PC-9 (cell line): ENCODE measurements at regions of chr6 and their contacts with region 1.

Region 1: GRCh38 chr6:115570331-115570730 is 490.4 kb downstream of the FRK start:
- DNase-seq: no peak
- H3K4me3 ChIP-seq: no peak overlapping the region
- H3K27ac ChIP-seq: no peak overlapping the region
- H3K4me1 ChIP-seq: no peaks in the 10 kb centered on the region
- H3K27me3 ChIP-seq: no peaks in the 10 kb centered on the region
- CTCF ChIP-seq: no peak

Region 2: DNA sequence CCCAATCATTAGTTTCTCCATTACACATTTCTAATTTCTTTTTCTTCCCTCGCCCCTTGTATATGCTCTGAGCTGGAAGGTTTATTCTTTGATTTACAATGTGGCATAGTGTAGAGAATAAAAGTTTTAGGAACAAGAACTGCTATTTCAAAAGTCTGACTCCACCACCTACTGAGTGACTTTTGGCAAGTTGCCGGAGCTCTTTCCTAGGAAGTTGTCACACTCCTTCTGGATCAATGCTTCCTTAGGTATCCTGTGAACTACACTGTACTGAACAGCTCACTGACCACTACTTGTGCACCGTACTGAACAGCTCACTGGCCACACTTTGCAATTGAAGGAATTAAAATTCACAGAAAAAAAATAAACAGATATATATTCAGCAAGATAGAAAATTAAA is 32.1 kb after region 1 on chr6:
- CTCF ChIA-PET with region 1: no interaction called
- POLR2A ChIA-PET with region 1: no interaction called
- intact Hi-C with region 1: no loop called
- DNase-seq: peak in 1 of 2 experiments; percentile 24
- H3K4me3 ChIP-seq: no peak overlapping the region
- H3K27ac ChIP-seq: no peak overlapping the region
- H3K4me1 ChIP-seq: no peaks in the 10 kb centered on the region
- H3K27me3 ChIP-seq: no peaks in the 10 kb centered on the region
- CTCF ChIP-seq: no peak

Region 3: GRCh38 chr6:115720900-115721299 is 150.6 kb after region 1 on chr6:
- CTCF ChIA-PET with region 1: no interaction called
- POLR2A ChIA-PET with region 1: interaction called, 12 read pairs
- intact Hi-C with region 1: no loop called
- DNase-seq: no peak
- H3K4me3 ChIP-seq: no peak overlapping the region
- H3K27ac ChIP-seq: no peak overlapping the region
- H3K4me1 ChIP-seq: no peaks in the 10 kb centered on the region
- H3K27me3 ChIP-seq: no peaks in the 10 kb centered on the region
- CTCF ChIP-seq: no peak

Region 4: DNA sequence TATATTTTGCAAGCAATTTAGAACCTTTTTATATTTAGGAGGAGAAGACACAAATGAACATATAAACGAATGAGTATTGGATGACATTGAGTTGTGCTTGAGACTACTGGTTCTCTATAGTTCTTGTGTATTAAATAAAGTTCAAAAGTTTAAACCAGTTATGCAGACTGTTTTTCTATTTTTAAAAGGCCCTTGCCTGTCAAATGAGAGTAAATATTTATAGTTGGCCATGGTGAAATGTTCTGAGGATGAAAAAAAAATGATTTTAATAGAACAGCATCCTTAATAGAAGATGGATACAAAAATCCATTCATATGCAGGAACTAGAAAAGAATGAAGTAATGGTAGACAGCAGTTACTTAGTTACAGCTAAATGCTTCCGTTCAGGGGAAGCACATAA is 619.1 kb after region 1 on chr6:
- CTCF ChIA-PET with region 1: no interaction called
- POLR2A ChIA-PET with region 1: no interaction called
- intact Hi-C with region 1: no loop called
- DNase-seq: no peak
- H3K4me3 ChIP-seq: no peak overlapping the region
- H3K27ac ChIP-seq: no peak overlapping the region
- H3K4me1 ChIP-seq: no peaks in the 10 kb centered on the region
- H3K27me3 ChIP-seq: no peaks in the 10 kb centered on the region
- CTCF ChIP-seq: no peak